Activated naive CD8-positive, alpha-beta T cell treated with anti-CD3 and anti-CD28 coated beads, Interleukin-2, amount 10 ng/mL, durations not matched to agents 7 days and 5 days (primary cell): ENCODE measurements at regions of chr19 and their contacts with region 1.

Region 1: DNA sequence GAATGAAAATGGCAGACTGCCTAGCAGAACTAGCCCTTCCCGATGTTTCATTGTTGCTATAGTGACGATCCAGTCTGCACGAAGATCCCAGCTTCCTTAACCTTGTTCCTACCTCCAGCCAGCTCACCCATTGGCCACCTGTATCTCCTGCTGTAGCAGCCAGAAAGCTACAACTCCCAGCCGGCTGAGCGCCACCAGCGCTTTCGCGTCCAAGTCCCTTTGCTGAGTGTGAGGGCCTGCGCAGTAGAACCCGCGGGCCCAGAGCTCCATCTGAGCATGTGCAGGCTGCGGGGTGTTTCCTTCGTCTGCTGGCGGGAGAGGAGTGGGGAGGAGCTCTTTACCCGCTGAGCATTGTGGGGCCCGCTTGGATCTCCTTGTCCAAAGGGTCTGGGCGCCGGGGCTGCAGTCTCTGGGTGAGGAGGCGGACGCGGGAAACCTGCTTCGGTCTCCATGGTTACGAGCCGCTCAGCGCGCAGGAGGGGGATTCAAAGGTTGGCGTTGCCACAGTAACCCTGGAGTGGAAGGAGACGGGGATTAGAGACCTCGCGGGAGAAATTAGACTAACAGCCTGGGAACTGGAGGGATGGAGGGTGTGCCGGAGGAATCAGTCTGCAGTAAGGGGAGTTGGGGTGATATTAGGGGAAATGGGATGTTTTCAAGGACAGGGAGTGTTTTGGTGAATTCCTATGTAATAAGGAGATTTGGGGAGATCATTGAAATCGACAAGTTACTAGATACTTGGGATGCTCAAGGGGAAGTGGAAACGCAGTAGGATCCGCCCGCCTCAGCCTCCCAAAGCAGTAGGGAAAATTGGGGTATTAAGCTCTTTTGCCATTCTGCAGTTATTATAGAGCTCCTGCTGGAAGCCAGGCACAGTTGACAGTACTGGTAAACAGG is 33.5 kb downstream of the ZSWIM9 start:
- DNase-seq: peak; percentile 86
- ATAC-seq: peak; percentile 100
- H3K4me3 Mint-ChIP-seq: no peak overlapping the region
- H3K27ac Mint-ChIP-seq: no peak overlapping the region
- H3K4me1 Mint-ChIP-seq: peaks cover 22% of the 10 kb centered on the region
- H3K27me3 Mint-ChIP-seq: no peaks in the 10 kb centered on the region

Region 2: GRCh38 chr19:48170038-48170812 is 33.8 kb before region 1 on chr19 and contains the starts of genes LIG1 and ZSWIM9:
- POLR2A ChIA-PET with region 1: interaction called, 25 read pairs
- DNase-seq: peak; percentile 95
- ATAC-seq: peak; percentile 88
- H3K4me3 Mint-ChIP-seq: peak within 1 kb of the TSS; percentile 99
- H3K27ac Mint-ChIP-seq: peak within 1 kb of the TSS; percentile 99
- H3K4me1 Mint-ChIP-seq: peaks cover 32% of the 10 kb centered on the region
- H3K27me3 Mint-ChIP-seq: no peaks in the 10 kb centered on the region
- total RNA-seq, gene LIG1: 158 to 168 TPM
- total RNA-seq, gene ZSWIM9: 10.2 to 13.3 TPM

Region 3: GRCh38 chr19:48190288-48190884 is 13.6 kb before region 1 on chr19:
- POLR2A ChIA-PET with region 1: interaction called, 12 read pairs
- DNase-seq: peak; percentile 47
- ATAC-seq: peak; percentile 76
- H3K4me3 Mint-ChIP-seq: no peak overlapping the region
- H3K27ac Mint-ChIP-seq: no peak overlapping the region
- H3K4me1 Mint-ChIP-seq: peaks cover 3% of the 10 kb centered on the region
- H3K27me3 Mint-ChIP-seq: no peaks in the 10 kb centered on the region

Region 4: DNA sequence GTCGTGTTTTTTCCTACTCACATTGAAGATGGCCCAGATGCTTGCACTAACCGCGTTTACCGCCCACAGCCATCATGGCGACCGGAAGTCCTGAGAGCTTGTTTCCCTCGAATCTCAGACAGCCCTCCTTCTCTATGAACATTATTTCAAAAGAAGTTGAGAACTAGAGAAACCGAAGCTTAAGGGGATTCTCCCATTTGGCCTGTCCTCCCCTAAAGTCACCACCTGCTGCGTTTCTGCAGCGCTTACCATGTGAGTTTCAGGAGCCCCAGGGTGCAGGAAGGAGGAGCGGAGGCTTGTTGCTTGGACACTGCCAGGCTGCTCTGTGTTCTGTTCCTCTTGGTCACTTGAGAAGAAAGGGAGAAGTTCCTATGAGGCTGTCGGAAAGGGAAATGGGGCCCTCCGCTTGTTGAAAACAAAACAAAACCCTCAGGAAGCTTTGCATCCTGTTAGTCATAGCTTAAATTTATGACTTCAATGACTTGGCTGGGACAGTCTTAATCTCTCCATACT is 45.6 kb after region 1 on chr19:
- POLR2A ChIA-PET with region 1: interaction called, 29 read pairs
- DNase-seq: peak; percentile 78
- ATAC-seq: peak; percentile 80
- H3K4me3 Mint-ChIP-seq: peak overlapping the region; percentile 94
- H3K27ac Mint-ChIP-seq: peak overlapping the region; percentile 97
- H3K4me1 Mint-ChIP-seq: peaks cover 69% of the 10 kb centered on the region
- H3K27me3 Mint-ChIP-seq: no peaks in the 10 kb centered on the region

Region 5: GRCh38 chr19:48255376-48256303 is 51.7 kb after region 1 on chr19 and contains the start of gene CARD8:
- POLR2A ChIA-PET with region 1: interaction called, 27 read pairs
- DNase-seq: peak; percentile 76
- ATAC-seq: peak; percentile 79
- H3K4me3 Mint-ChIP-seq: peak within 1 kb of the TSS; percentile 94
- H3K27ac Mint-ChIP-seq: peak within 1 kb of the TSS; percentile 96
- H3K4me1 Mint-ChIP-seq: peaks cover 59% of the 10 kb centered on the region
- H3K27me3 Mint-ChIP-seq: no peaks in the 10 kb centered on the region
- total RNA-seq, gene CARD8: 249 to 255 TPM